Activated T-helper 2 cell treated with anti-CD3 and anti-CD28 coated beads, Interferon-gamma antibody, Interleukin-2, Interleukin-4, amounts not matched to agents 10 μg/mL and 5 μg/mL and 100 μg/mL, durations not matched to agents 14 hours and 24 hours and 36 hours (primary cell): ENCODE measurements at regions of chr20 and their contacts with region 1.

Region 1: DNA sequence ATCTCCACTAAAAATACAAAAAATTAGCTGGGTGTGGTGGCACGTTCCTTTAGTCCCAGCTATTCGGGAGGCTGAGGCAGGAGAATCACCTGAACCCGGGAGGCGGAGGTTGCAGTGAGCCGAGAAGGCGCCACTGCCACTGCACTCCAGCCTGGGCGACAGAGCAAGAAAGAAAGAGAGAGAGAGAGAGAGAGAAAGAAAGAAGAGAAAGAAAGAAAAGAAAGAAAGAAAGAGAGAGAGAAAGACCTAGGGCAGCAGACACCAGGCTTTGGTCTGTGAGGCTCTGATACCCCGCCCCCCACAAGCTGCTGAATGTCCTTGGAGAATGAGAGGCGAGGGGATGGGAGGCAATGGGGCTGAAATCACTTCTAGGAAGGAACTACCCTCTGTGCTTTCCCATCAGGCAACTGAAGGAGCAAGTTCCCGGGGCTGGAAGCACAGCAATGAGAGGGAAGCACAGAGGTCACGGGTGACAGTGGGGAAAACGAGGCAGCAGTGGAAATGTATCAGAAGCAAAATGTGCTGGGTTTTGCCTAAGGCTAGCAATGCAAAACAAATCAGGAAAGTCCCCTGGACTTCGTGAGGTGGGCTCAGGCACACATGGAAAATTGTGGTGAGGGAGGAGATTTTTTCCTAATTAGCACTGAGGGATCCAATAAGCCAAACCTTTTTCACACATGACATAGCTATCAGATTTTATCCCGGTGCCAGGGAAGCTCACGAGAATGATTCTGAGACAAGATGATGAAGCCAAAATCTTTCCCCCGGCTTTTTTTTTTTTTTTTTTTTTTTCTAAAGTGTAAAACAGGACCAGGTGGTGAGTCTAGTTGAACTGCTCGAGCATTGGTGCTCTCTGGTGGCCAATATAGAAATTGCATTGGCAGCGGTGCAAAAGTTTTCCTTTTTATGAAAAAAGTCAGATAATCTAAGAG is 16.9 kb upstream of the ARFGEF2 start:
- DNase-seq: peak; percentile 54
- H3K4me3 Mint-ChIP-seq: no peak overlapping the region
- H3K27ac Mint-ChIP-seq: no peak overlapping the region
- H3K4me1 Mint-ChIP-seq: peaks cover 13% of the 10 kb centered on the region
- H3K27me3 Mint-ChIP-seq: peaks cover 3% of the 10 kb centered on the region

Region 2: GRCh38 chr20:48635433-48636310 is 269.0 kb before region 1 on chr20:
- intact Hi-C with region 1: loop called (anchors 1 kb)
- DNase-seq: peak; percentile 46
- H3K4me3 Mint-ChIP-seq: no peak overlapping the region
- H3K27ac Mint-ChIP-seq: peak overlapping the region; percentile 53
- H3K4me1 Mint-ChIP-seq: peaks cover 4% of the 10 kb centered on the region
- H3K27me3 Mint-ChIP-seq: no peaks in the 10 kb centered on the region

Region 3: DNA sequence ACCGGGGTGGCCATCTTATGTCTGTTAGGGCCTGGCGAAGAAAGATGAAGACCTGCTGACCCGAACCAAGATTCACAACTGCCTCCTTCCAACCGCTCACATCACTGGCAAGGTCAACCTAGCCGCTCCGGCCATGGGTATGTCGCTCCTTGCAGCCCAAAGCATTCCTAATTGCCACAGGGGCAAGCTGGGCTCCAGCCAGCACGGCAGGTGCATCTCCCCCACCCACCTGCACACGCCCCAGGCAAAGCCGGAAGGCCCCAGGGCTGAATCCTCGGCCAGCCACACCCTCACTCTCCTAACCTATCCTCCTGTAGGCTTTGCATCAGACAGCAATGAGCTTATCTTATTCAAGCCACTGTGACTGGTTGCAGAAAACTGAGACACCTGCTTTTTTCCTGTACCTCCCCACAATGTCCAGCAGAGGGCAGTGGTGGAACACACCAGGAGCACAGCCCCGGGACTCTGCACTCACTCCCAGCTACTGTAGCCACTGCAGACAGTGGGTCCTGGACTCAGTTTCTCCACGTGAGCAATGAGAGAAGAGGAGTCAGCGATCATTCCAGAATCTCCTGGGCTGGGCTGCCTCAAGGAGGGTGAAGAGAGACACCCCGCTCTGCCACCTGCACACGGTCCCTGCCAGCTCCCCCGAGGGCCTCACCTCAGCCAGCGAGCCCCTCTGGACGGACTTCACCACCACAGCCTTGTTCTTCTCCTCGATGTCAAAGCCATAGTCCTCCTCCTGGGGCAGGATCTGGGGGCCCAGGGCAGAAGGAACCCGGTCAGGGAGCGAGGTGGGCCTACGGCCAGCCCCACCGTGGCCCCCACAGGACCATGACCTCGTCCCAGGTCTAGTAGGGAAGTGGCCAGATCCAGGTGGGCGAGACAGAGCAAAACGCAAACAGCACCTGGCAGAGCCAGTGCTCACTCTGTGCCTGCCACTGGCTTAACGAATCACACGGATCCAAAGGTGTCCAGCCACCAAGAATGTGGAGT is 246.9 kb before region 1 on chr20:
- intact Hi-C with region 1: loop called (anchors 1 kb)
- DNase-seq: peak; percentile 58
- H3K4me3 Mint-ChIP-seq: no peak overlapping the region
- H3K27ac Mint-ChIP-seq: no peak overlapping the region
- H3K4me1 Mint-ChIP-seq: no peaks in the 10 kb centered on the region
- H3K27me3 Mint-ChIP-seq: no peaks in the 10 kb centered on the region

Region 4: GRCh38 chr20:48892844-48893243 is 11.8 kb before region 1 on chr20:
- intact Hi-C with region 1: no loop called
- DNase-seq: no peak
- H3K4me3 Mint-ChIP-seq: no peak overlapping the region
- H3K27ac Mint-ChIP-seq: no peak overlapping the region
- H3K4me1 Mint-ChIP-seq: no peaks in the 10 kb centered on the region
- H3K27me3 Mint-ChIP-seq: peaks cover 18% of the 10 kb centered on the region